Calu3 (cell line): ENCODE measurements at regions of chr17 and their contacts with region 1.

Region 1: DNA sequence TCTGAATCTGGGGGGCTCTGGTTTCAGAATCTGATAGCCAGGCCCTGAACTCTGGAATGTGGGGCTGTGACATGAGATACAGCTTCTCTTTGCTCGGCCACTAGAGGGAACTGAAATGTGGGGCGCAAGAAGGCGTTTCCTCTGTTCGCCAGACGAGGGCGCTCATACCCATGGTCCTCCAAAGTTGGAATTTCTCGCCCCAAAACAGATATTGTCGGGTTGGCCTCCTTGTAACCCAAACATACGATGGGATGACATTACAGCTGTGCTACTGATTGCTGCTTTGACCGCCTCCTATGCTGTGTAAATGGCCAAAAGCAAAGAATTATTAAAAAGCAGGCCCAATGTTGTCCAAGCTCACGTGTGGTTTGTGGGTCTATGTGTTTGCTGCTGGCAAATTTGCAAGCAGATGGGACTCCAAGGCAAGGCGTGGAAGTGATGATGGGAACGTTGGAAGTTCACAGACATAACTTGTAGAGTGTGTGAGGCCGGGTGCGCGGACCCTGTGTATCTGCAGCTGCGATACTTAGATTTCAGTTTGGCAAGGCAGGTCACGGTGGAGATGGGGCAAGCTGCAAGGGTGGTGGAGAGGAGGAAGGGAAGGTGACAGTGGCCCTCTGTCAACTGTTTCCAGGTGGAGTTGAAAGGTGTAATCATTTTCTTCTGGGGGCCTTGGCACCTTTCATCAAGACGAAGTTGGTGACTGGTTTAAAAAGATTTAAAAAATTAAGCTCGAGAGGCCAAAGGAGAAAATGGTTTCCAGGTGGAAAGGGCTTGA is 13.0 kb upstream of the MSI2 start:
- DNase-seq: peak; percentile 65
- H3K4me3 Mint-ChIP-seq: no peak overlapping the region
- H3K27ac Mint-ChIP-seq: peak overlapping the region; percentile 54
- H3K4me1 Mint-ChIP-seq: peaks cover 9% of the 10 kb centered on the region
- H3K27me3 Mint-ChIP-seq: peaks cover 17% of the 10 kb centered on the region
- CTCF ChIP-seq: peak; percentile 94

Region 2: DNA sequence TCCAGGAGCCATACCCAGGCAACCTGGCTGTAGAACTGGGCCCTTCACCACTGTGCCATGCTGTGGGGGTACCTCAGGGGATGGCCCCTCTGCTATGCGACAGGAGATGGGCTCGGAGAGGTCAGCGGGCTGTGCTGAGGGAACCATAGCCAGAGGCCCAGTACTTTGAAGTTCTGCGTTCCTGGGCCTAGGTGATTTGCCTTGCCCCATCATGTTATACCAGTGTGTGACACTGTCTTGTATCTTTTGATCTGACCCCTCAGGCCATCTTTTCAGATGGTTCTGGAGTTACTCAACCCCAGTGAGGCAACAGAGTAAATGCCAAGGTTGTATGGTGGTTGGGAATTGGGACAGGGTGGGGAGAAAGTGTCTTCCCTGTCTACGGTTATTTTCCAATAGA is 21.4 kb after region 1 on chr17:
- CTCF ChIA-PET with region 1: no interaction called
- intact Hi-C with region 1: no loop called
- DNase-seq: no peak
- H3K4me3 Mint-ChIP-seq: no peak overlapping the region
- H3K27ac Mint-ChIP-seq: no peak overlapping the region
- H3K4me1 Mint-ChIP-seq: no peaks in the 10 kb centered on the region
- H3K27me3 Mint-ChIP-seq: no peaks in the 10 kb centered on the region
- CTCF ChIP-seq: no peak

Region 3: GRCh38 chr17:57284984-57285646 is 41.8 kb after region 1 on chr17:
- CTCF ChIA-PET with region 1: no interaction called
- intact Hi-C with region 1: no loop called
- DNase-seq: no peak
- H3K4me3 Mint-ChIP-seq: no peak overlapping the region
- H3K27ac Mint-ChIP-seq: no peak overlapping the region
- H3K4me1 Mint-ChIP-seq: no peaks in the 10 kb centered on the region
- H3K27me3 Mint-ChIP-seq: no peaks in the 10 kb centered on the region
- CTCF ChIP-seq: no peak

Region 4: DNA sequence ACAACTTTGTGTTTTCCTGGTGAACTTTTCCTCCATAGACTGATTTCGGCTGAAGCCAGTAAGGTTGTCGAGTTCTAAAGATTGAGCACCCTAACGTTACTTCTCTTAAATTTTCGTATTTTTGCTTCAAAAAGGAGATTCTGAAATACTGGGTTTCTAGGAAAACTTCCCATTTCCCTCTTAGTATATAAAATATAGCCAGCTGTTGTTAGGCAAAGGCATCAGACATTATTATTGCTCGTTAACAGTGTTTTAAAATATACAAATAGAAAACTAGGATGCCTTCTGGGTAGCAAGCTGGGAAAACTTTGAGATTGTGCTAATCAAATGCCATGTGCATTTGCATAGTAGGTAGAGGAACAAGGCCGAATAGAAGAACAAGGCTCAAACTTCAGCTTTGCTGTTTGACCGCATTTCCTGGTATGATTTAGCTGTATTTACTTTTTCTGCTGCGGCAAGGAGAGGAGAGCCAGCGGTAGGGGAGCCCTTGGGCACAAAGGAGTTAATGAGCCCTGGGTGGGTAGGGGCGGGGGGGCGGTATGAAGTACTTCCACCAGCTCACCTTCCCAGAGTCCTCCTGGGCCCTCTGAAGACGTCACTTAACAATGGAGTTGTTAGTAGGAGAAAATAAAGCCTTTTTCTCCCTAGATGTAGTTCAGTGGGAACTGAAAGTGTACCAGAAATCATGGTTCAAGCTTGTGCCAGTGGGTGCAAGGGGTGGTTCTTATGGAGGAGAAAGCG is 164.9 kb after region 1 on chr17:
- CTCF ChIA-PET with region 1: interaction called, 13 read pairs
- intact Hi-C with region 1: no loop called
- DNase-seq: peak; percentile 34
- H3K4me3 Mint-ChIP-seq: peak overlapping the region; percentile 51
- H3K27ac Mint-ChIP-seq: peak overlapping the region; percentile 97
- H3K4me1 Mint-ChIP-seq: peaks cover 38% of the 10 kb centered on the region
- H3K27me3 Mint-ChIP-seq: no peaks in the 10 kb centered on the region
- CTCF ChIP-seq: no peak

Region 5: GRCh38 chr17:57440522-57441485 is 197.4 kb after region 1 on chr17:
- CTCF ChIA-PET with region 1: interaction called, 33 read pairs
- intact Hi-C with region 1: loop called (anchors 1 kb)
- DNase-seq: peak; percentile 71
- H3K4me3 Mint-ChIP-seq: peak overlapping the region; percentile 57
- H3K27ac Mint-ChIP-seq: peak overlapping the region; percentile 89
- H3K4me1 Mint-ChIP-seq: peaks cover 55% of the 10 kb centered on the region
- H3K27me3 Mint-ChIP-seq: no peaks in the 10 kb centered on the region
- CTCF ChIP-seq: peak; percentile 30

Region 6: DNA sequence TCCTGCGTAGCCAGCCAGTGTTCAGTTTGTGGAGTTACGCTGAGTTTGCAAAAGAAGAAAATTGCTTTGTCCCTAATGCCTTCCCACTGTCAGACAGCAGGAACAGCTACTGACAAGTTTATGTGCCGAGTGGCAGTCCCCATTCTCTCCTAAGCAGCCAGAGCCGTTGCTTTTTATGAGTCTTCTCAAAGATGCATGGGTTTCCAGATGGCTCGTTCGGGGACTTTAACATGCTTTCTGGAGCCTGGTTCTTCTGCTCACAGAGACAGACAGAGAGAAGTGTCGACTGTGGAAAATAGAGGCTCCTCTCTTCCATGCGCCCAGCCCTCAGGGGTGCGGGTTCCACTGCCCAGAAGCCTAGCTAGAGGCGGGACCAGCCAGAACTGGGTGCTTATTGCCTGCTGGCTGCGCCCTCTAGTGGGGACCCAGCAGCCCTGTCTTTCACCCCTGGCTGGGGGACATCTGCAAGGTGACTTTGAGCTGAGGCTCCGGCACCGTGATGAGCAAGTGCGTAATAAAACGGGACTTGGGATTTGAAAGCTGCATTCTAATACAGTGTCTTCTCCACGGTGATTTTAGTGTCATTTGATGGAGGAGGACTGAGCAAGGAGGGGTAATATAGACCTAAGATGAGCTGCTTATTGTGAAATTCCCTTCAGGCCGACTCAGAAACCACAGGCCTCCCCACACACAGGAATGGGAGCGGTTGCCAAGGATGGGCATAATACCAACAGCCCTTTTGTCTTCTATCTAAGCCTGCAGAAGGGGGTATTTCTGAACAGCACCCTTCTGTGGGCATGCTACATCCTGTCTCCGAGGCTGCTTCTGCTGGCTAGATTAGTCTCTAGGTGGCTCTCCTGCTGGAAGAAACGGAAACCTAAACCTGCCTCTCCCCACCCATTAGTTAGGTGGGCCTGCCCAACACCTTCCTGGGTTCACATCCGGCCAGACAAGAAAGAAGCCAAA is 428.6 kb after region 1 on chr17:
- CTCF ChIA-PET with region 1: interaction called, 10 read pairs
- intact Hi-C with region 1: loop called (anchors 10 kb)
- DNase-seq: peak; percentile 64
- H3K4me3 Mint-ChIP-seq: no peak overlapping the region
- H3K27ac Mint-ChIP-seq: no peak overlapping the region
- H3K4me1 Mint-ChIP-seq: no peaks in the 10 kb centered on the region
- H3K27me3 Mint-ChIP-seq: no peaks in the 10 kb centered on the region
- CTCF ChIP-seq: peak; percentile 73

Region 7: GRCh38 chr17:57747221-57748017 is 504.1 kb after region 1 on chr17:
- CTCF ChIA-PET with region 1: interaction called, 12 read pairs
- intact Hi-C with region 1: loop called (anchors 5 kb)
- DNase-seq: peak; percentile 17
- H3K4me3 Mint-ChIP-seq: no peak overlapping the region
- H3K27ac Mint-ChIP-seq: no peak overlapping the region
- H3K4me1 Mint-ChIP-seq: no peaks in the 10 kb centered on the region
- H3K27me3 Mint-ChIP-seq: peaks cover 71% of the 10 kb centered on the region
- CTCF ChIP-seq: no peak